SK-N-SH (cell line): ENCODE measurements at regions of chr11 and their contacts with region 1.

Region 1: DNA sequence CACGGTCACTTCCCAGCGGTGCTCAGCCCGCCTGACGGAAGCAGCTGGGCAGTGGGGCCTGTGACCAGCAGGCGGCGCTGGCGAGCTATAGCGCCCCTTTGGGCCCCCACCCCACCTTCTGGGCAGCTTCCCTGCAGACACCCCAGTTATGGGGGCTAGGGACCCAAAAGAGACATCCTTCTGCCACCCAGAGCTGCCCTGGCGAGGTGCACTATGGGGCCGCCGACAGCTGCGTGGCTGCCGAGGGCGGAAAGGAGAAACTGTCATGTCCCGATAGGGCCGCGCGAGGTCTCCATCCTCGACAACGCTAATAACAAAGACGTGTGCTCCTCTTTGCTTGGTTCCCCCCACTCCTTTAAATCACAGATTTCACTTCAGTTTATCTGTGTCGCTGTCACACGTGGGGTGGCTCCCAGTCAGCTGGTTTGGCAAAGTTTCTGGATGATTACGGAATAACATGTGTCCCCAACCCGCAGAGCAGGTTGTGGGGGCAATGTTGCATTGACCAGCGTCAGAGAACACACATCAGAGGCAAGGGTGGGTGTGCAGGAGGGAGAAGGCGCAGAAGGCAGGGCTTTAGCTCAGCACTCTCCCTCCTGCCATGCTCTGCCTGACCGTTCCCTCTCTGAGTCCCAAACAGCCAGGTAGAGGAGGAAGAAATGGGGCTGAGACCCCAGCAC is 674 bp upstream of the MYO7A start:
- DNase-seq: peak; percentile 89
- H3K4me3 ChIP-seq: peak overlapping the region; percentile 47 to 74
- H3K27ac ChIP-seq: peak overlapping the region in 1 of 2 experiments; percentile 13; a peak in 1 of 4 replicates
- H3K4me1 ChIP-seq: peaks cover 0 to 42% of the 10 kb centered on the region in 2 experiments; a peak in 2 of 4 replicates
- H3K27me3 ChIP-seq: no peaks in the 10 kb centered on the region
- CTCF ChIP-seq: peak; percentile 100
- EP300 ChIP-seq: no peak
- RAD21 ChIP-seq: peak; percentile 71

Region 2: GRCh38 chr11:76939211-76939631 is 188.2 kb before region 1 on chr11:
- CTCF ChIA-PET with region 1: no interaction called
- POLR2A ChIA-PET with region 1: no interaction called
- DNase-seq: no peak
- H3K4me3 ChIP-seq: no peak overlapping the region
- H3K27ac ChIP-seq: no peak overlapping the region
- H3K4me1 ChIP-seq: no peaks in the 10 kb centered on the region
- H3K27me3 ChIP-seq: no peaks in the 10 kb centered on the region
- CTCF ChIP-seq: no peak
- EP300 ChIP-seq: no peak
- RAD21 ChIP-seq: no peak

Region 3: GRCh38 chr11:76955459-76956114 is 171.8 kb before region 1 on chr11:
- CTCF ChIA-PET with region 1: no interaction called
- POLR2A ChIA-PET with region 1: no interaction called
- DNase-seq: no peak
- H3K4me3 ChIP-seq: no peak overlapping the region
- H3K27ac ChIP-seq: no peak overlapping the region
- H3K4me1 ChIP-seq: no peaks in the 10 kb centered on the region
- H3K27me3 ChIP-seq: no peaks in the 10 kb centered on the region
- CTCF ChIP-seq: no peak
- EP300 ChIP-seq: no peak
- RAD21 ChIP-seq: no peak

Region 4: GRCh38 chr11:77047007-77047927 is 80.1 kb before region 1 on chr11:
- CTCF ChIA-PET with region 1: interaction called, 21 read pairs
- POLR2A ChIA-PET with region 1: no interaction called
- DNase-seq: peak; percentile 82
- H3K4me3 ChIP-seq: peak overlapping the region; percentile 34 to 67
- H3K27ac ChIP-seq: peak overlapping the region in 1 of 2 experiments; percentile 48; a peak in 1 of 4 replicates
- H3K4me1 ChIP-seq: peaks cover 3 to 6% of the 10 kb centered on the region in 2 experiments; a peak in 2 of 4 replicates
- H3K27me3 ChIP-seq: no peaks in the 10 kb centered on the region
- CTCF ChIP-seq: peak; percentile 79
- EP300 ChIP-seq: no peak
- RAD21 ChIP-seq: peak; percentile 74

Region 5: DNA sequence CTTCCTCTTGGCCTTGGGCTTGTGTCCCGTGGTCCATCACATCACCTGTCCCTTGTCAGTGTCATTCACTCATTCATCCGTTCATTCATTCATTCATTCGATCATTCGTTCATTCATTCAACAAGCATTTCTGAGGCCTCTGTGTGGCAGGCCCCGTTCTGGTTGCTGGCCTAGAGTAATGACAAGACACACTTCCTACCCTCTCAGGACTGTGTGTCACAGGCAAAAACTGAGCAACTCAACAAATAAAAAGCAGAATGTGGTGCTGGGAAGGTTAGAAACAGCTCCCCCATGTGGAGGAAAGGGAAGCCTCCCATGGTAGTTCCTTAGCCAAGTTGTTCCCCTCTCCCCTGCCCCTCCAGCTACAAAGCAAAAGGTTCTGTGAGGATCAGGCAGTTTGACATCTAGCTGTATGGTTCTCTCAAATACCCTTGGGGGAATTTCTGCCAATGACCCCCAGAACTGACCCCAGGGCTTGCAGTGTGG is 26.3 kb before region 1 on chr11:
- CTCF ChIA-PET with region 1: interaction called, 19 read pairs
- POLR2A ChIA-PET with region 1: no interaction called
- DNase-seq: peak; percentile 59
- H3K4me3 ChIP-seq: no peak overlapping the region
- H3K27ac ChIP-seq: no peak overlapping the region
- H3K4me1 ChIP-seq: peaks cover 0 to 10% of the 10 kb centered on the region in 2 experiments; a peak in 1 of 4 replicates
- H3K27me3 ChIP-seq: no peaks in the 10 kb centered on the region
- CTCF ChIP-seq: peak; percentile 67
- EP300 ChIP-seq: no peak
- RAD21 ChIP-seq: peak; percentile 35

Region 6: DNA sequence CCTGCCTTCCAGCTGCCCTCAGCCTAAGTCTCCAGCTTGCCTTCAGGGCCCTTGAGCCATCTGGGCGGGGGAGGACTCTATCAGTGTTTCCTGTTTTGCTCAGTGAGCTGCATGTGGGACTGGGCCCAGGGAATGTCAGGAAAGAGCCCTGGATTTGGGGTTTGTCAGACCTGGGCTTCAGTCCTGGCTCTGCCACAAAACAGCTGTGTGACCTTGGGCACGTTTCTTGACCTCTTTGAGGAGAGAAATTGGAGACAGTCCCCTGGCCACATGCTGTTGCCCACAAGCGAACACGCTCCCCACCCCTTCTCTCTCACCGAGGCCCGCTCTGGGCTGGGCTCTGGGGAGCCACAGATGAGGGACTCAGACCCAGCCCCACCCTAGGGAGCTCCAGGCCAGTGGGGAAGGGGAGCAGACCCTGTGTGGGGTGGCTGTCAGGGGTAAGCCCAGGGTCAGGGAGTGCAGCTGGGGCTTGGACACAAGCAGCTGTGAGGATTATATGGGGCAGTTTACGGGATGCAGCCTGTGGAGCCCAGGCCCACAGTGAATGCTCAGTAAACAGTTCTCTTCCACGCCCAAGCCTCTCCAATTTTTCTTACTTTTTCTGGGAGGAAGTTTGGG is 13.0 kb after region 1 on chr11:
- CTCF ChIA-PET with region 1: interaction called, 30 read pairs
- POLR2A ChIA-PET with region 1: no interaction called
- DNase-seq: peak; percentile 75
- H3K4me3 ChIP-seq: no peak overlapping the region
- H3K27ac ChIP-seq: peak overlapping the region in 1 of 2 experiments; percentile 62; a peak in 1 of 4 replicates
- H3K4me1 ChIP-seq: peaks cover 0 to 41% of the 10 kb centered on the region in 2 experiments; a peak in 1 of 4 replicates
- H3K27me3 ChIP-seq: no peaks in the 10 kb centered on the region
- CTCF ChIP-seq: no peak
- EP300 ChIP-seq: no peak
- RAD21 ChIP-seq: no peak

Region 7: DNA sequence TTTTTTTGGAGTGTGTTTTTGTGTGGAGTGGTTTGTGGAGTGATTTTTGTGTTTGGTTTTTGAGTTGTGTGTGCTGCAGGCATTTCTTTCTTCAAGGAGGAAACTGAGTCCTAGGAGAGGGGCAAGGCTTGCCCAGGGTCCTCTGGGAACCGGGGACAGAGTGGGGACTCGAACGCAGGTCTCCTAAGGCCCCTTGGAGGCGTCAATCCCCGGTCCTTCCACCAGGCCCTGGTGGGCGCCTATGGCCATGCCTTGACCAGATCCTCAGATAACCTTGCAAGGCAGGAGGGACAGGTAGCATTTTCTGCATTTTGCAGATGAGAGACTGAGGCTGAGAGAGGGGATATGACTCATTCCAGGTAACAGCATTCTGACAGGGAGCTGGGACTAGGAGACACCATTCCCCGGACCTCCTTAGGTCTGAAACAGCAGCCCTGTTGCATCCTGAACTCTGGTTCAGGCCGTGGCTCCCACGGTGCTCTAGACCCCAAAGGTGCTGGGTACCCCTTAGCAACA is 39.8 kb after region 1 on chr11:
- CTCF ChIA-PET with region 1: interaction called, 25 read pairs
- POLR2A ChIA-PET with region 1: no interaction called
- DNase-seq: no peak
- H3K4me3 ChIP-seq: no peak overlapping the region
- H3K27ac ChIP-seq: no peak overlapping the region
- H3K4me1 ChIP-seq: no peaks in the 10 kb centered on the region
- H3K27me3 ChIP-seq: no peaks in the 10 kb centered on the region
- CTCF ChIP-seq: no peak
- EP300 ChIP-seq: no peak
- RAD21 ChIP-seq: no peak

Region 8: GRCh38 chr11:77198440-77198849 is 71.1 kb after region 1 on chr11:
- CTCF ChIA-PET with region 1: interaction called, 35 read pairs
- POLR2A ChIA-PET with region 1: no interaction called
- DNase-seq: peak; percentile 62
- H3K4me3 ChIP-seq: no peak overlapping the region
- H3K27ac ChIP-seq: no peak overlapping the region
- H3K4me1 ChIP-seq: no peaks in the 10 kb centered on the region
- H3K27me3 ChIP-seq: no peaks in the 10 kb centered on the region
- CTCF ChIP-seq: peak; percentile 41
- EP300 ChIP-seq: no peak
- RAD21 ChIP-seq: peak; percentile 24

Region 9: DNA sequence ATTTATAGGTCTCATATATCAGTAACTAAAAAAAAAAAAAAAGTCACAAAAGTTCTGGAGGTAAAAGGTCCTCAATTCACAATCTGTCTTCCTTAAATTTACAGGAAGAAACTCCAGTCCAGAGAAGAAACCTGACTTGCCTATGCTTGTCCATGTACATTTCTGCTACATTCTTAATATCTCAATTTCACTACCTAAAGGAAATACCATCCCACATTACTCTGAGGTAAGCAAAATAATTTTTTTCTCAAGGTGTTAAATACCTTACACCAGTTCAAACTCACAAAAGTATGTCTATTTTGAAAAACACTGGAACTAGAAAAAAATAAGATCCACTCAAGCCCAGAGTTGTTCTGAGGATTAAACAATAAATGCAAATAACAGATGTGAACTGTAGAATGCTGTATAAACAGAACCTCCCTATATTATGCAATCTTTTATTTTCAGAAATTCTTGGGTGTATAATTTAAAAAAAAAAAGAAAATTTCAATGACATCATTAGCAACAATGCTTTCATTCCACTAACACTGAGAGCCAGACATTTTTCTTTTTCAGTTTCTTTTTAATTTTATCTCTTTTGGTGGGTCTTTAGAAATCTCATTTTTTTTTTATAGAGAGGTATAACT is 224.0 kb after region 1 on chr11:
- CTCF ChIA-PET with region 1: no interaction called
- POLR2A ChIA-PET with region 1: no interaction called
- DNase-seq: no peak
- H3K4me3 ChIP-seq: no peak overlapping the region
- H3K27ac ChIP-seq: no peak overlapping the region
- H3K4me1 ChIP-seq: 0 out of 4 replicates have a peak, but pooled peaks cover 0 to 4% of the 10 kb centered on the region in 2 experiments
- H3K27me3 ChIP-seq: no peaks in the 10 kb centered on the region
- CTCF ChIP-seq: no peak
- EP300 ChIP-seq: no peak
- RAD21 ChIP-seq: no peak

Region 10: DNA sequence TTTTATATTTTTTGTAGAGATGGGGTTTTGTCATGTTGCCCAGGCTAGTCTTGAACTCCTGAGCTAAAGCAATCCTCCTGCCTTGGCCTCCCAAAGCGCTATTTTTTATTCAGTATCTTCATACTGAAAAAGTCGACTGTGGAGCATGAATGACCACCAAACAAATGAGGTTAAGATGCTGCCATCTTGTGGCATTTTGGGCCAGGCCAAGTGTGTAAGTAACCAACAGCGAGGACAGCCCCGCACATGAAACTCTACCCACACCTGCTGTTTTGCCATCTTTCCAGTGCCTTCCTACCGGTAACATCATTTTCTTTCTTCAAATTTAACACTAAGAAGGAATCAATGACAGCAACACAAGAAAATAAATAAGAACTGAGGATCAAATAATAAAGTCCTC is 430.2 kb after region 1 on chr11:
- CTCF ChIA-PET with region 1: interaction called, 17 read pairs
- POLR2A ChIA-PET with region 1: no interaction called
- DNase-seq: peak; percentile 26
- H3K4me3 ChIP-seq: no peak overlapping the region
- H3K27ac ChIP-seq: no peak overlapping the region
- H3K4me1 ChIP-seq: peaks cover 0 to 4% of the 10 kb centered on the region in 2 experiments; a peak in 1 of 4 replicates
- H3K27me3 ChIP-seq: no peaks in the 10 kb centered on the region
- CTCF ChIP-seq: peak; percentile 37; the same call in 1 of the 2 replicates
- EP300 ChIP-seq: no peak
- RAD21 ChIP-seq: peak; percentile 57